ENCODE measurements at regions of chr20 and their contacts with region 1.

Region 1: DNA sequence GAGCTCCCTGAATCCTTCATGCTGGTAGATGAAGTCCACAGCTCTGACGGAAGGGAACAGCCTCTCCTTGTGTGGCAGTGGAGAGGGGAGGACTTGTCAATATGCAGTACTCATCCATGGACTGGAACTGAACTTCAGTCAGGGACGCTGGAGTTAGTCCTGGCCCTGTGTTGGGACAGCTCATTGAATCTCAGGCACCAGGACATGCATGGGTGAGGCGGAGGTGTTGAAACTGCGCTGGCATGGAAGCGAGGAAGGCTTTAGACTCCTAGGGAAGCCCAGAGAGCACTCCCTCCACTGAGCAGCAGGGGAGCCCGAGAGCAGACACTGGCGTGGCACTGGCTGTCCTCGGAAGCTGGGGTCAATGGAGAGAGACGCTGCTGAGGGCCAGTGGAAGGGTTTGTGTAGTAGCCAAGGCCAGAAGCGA is 161.3 kb upstream of the GGTLC1 start:
- DNase-seq: no peak
- ATAC-seq: no peak
- H3K4me3 ChIP-seq: no peak overlapping the region
- H3K27ac ChIP-seq: no peak overlapping the region
- H3K4me1 ChIP-seq: no peaks in the 10 kb centered on the region
- H3K27me3 ChIP-seq: no peaks in the 10 kb centered on the region
- CTCF ChIP-seq: no peak
- POLR2A ChIP-seq: no peak

Region 2: GRCh38 chr20:23776067-23776771 is 373.7 kb before region 1 on chr20:
- in situ Hi-C with region 1: no loop called
- intact Hi-C with region 1: no loop called
- DNase-seq: no peak
- ATAC-seq: no peak
- H3K4me3 ChIP-seq: no peak overlapping the region
- H3K27ac ChIP-seq: no peak overlapping the region
- H3K4me1 ChIP-seq: no peaks in the 10 kb centered on the region
- H3K27me3 ChIP-seq: no peaks in the 10 kb centered on the region
- CTCF ChIP-seq: no peak
- POLR2A ChIP-seq: no peak

Region 3: DNA sequence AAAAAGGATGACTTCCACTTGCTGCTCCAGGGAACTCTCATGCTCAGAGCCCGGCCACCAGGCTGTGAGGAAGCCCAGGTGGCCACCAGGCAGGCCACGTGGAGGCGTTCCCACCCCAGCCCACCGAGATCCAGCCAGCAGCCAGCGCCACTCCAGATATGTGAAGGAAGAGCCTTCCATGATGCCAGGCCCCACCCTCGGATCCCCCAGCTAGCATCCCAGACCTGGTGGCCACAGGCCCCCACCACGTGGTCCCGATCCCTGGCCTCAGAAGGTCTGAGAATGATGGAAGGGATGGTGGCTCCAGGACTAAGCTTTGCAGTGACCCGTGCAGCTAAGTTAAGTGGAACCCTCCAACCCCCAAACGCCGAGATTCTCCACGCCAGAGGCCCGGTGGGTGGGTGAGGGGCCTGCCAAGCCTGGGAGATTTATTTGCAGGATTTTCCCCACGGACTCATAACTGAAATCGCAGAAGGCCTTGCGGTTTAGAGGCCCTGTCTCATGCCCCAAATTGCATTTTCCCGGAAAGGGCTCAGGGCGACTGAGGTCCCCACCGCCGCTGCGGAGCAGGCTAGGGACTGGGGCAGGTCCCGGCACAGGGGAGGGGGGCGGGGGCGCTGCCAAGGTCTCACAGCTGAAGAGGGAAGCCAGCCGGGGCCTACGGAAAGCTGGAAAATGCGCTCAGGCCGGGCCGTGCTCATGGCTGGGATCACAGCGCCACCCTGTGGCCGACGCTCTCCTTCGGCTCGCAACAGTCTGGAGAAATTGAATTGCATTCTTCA is 768.1 kb after region 1 on chr20:
- in situ Hi-C with region 1: loop called in 3 of 4 experiments (anchors 10 to 25 kb)
- intact Hi-C with region 1: no loop called
- DNase-seq: peak in 1 of 2 donors; percentile 29
- ATAC-seq: peak in 1 of 2 donors; percentile 70
- H3K4me3 ChIP-seq: peak overlapping the region in 1 of 4 donors; percentile 38
- H3K27ac ChIP-seq: no peak overlapping the region
- H3K4me1 ChIP-seq: peaks cover 0 to 7% of the 10 kb centered on the region in 2 donors
- H3K27me3 ChIP-seq: no peaks in the 10 kb centered on the region
- CTCF ChIP-seq: peak; percentile 46 to 72 (median 64)
- POLR2A ChIP-seq: no peak

Measured in gastrocnemius medialis (tissue), 4 donors.